Panc1 (cell line): ENCODE measurements at regions of chr22 and their contacts with region 1.

Region 1: DNA sequence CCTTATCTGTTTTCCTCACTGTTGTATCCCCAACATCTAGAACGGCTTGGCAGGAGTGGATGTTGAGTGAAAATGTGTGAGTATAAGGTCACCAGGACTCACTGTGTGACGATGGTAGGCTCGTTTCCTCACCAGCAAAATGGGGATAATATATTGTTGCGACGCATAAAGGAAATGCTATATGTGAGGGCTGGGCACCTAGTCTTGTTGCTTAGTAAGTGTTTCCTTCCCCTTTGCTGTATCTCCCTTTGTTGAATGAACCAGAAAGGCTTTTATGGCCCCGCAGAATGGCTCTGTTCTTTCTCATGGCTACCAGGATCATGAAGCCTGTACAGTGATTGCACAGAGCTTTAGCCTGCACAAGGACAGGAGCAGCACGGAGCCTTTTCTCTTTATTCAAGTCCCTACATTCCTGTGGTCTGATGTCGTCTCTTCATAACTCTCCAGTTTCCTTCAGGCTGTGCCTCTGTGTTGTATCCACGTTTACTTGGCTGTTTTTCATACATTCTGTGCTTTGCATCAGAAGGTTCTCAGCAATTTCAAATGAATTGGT is 5.4 kb downstream of the TNRC6B start:
- DNase-seq: no peak
- ATAC-seq: peak; percentile 72
- H3K4me3 ChIP-seq: 0 out of 4 replicates have a peak overlapping the region, but pooled peaks of 1 of the 2 experiments have one; percentile 2
- H3K27ac ChIP-seq: peak overlapping the region; percentile 68
- H3K4me1 ChIP-seq: peaks cover 27% of the 10 kb centered on the region
- H3K27me3 ChIP-seq: no peaks in the 10 kb centered on the region
- CTCF ChIP-seq: no peak

Region 2: GRCh38 chr22:40055143-40055883 is 127.8 kb before region 1 on chr22:
- CTCF ChIA-PET with region 1: no interaction called
- POLR2A ChIA-PET with region 1: no interaction called
- in situ Hi-C with region 1: no loop called
- intact Hi-C with region 1: loop called (anchors 10 kb)
- DNase-seq: no peak
- ATAC-seq: peak; percentile 56; the same call in 1 of the 2 replicates
- H3K4me3 ChIP-seq: no peak overlapping the region
- H3K27ac ChIP-seq: no peak overlapping the region
- H3K4me1 ChIP-seq: no peaks in the 10 kb centered on the region
- H3K27me3 ChIP-seq: no peaks in the 10 kb centered on the region
- CTCF ChIP-seq: no peak

Region 3: GRCh38 chr22:40238425-40239344 is 55.6 kb after region 1 on chr22:
- CTCF ChIA-PET with region 1: no interaction called
- POLR2A ChIA-PET with region 1: no interaction called
- in situ Hi-C with region 1: no loop called
- intact Hi-C with region 1: no loop called
- DNase-seq: peak; percentile 30
- ATAC-seq: peak; percentile 90
- H3K4me3 ChIP-seq: peak overlapping the region in 1 of 2 experiments; percentile 18; a peak in 2 of 4 replicates
- H3K27ac ChIP-seq: peak overlapping the region; percentile 51
- H3K4me1 ChIP-seq: peaks cover 24% of the 10 kb centered on the region
- H3K27me3 ChIP-seq: no peaks in the 10 kb centered on the region
- CTCF ChIP-seq: no peak

Region 4: GRCh38 chr22:40479126-40479800 is 296.2 kb after region 1 on chr22:
- CTCF ChIA-PET with region 1: no interaction called
- POLR2A ChIA-PET with region 1: no interaction called
- in situ Hi-C with region 1: no loop called
- intact Hi-C with region 1: no loop called
- DNase-seq: no peak
- ATAC-seq: no peak
- H3K4me3 ChIP-seq: no peak overlapping the region
- H3K27ac ChIP-seq: no peak overlapping the region
- H3K4me1 ChIP-seq: peaks cover 20% of the 10 kb centered on the region
- H3K27me3 ChIP-seq: no peaks in the 10 kb centered on the region
- CTCF ChIP-seq: no peak